IMR-90 (cell line): ENCODE measurements at regions of chr1 and their contacts with region 1.

Region 1: GRCh38 chr1:41573785-41574713 is 89.6 kb upstream of the EDN2 start:
- DNase-seq: peak; percentile 80
- ATAC-seq: peak; percentile 99
- H3K4me3 ChIP-seq: no peak overlapping the region
- H3K27ac ChIP-seq: no peak overlapping the region
- H3K4me1 ChIP-seq: no peaks in the 10 kb centered on the region
- H3K27me3 ChIP-seq: no peaks in the 10 kb centered on the region
- CTCF ChIP-seq: peak; percentile 99
- POLR2A ChIP-seq: peak; percentile 57; the same call in 1 of the 2 replicates
- RAD21 ChIP-seq: peak; percentile 100

Region 2: DNA sequence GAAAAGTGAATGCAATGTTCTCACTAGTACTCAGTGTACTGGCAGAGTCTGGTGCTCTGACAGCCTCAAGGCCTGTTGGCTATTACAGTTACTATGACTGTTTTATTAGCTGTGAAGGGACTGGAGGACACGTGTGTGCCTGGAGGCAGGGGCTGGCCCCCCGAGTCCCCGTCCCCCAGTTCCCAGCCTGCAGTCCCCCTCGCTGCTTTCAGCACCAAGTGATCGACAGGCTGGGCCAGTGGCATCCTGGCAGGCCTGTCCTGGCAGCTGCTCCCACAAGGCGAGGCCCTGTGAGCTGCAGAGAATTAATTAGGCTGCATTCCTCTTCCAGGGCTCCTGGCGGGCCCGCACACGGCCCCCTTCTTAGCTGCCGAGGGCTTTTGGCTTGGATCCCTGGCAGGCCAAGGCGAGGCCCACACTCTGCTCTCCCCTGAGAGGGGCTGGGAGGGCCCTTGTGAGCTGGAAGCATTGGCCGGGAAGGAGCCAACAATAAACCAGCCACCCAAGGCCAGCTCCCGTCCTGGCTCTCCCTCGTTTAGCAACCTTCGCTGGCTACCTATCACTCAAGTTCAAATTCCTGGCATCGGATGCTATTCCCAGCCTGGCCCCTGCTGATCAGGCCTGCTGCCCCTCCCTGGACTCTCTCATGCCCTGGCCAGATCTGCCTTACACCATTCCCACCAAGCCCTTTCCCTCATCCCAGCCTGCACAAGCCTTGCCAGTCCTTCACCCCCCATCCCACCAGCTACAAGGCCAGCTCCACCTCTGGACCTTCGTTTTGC is 99.4 kb before region 1 on chr1:
- CTCF ChIA-PET with region 1: no interaction called
- POLR2A ChIA-PET with region 1: no interaction called
- dilution Hi-C with region 1: no loop called
- in situ Hi-C with region 1: no loop called
- intact Hi-C with region 1: no loop called
- DNase-seq: no peak
- ATAC-seq: no peak
- H3K4me3 ChIP-seq: no peak overlapping the region
- H3K27ac ChIP-seq: no peak overlapping the region
- H3K4me1 ChIP-seq: no peaks in the 10 kb centered on the region; the same call in 1 of the 2 replicates
- H3K27me3 ChIP-seq: peaks cover 15% of the 10 kb centered on the region
- CTCF ChIP-seq: no peak
- POLR2A ChIP-seq: no peak
- RAD21 ChIP-seq: no peak

Region 3: DNA sequence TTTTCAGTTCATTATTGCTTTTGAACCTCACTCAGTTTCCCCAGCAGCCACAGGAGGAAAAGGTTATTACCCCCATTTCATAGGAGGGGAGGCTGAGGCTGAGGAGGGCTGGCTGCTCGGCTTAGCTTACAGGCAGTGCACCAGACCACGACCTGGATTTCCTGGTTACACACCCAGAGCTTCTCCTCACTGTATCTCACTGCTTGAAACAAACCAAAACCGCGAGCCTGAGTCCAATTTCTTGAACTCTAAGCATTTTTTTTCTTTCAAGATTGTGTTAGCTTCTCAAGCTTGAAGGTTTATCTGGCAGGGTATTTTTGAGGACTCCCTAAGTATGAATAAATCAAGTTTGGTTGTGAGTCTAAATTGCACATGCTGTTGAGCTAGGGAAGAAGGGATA is 99.3 kb after region 1 on chr1:
- CTCF ChIA-PET with region 1: no interaction called
- POLR2A ChIA-PET with region 1: no interaction called
- dilution Hi-C with region 1: no loop called
- in situ Hi-C with region 1: no loop called
- intact Hi-C with region 1: loop called (anchors 5 kb)
- DNase-seq: peak; percentile 64
- ATAC-seq: no peak
- H3K4me3 ChIP-seq: no peak overlapping the region
- H3K27ac ChIP-seq: peak overlapping the region; percentile 86
- H3K4me1 ChIP-seq: peaks cover 46% of the 10 kb centered on the region
- H3K27me3 ChIP-seq: no peaks in the 10 kb centered on the region
- CTCF ChIP-seq: no peak
- POLR2A ChIP-seq: no peak
- RAD21 ChIP-seq: no peak

Region 4: DNA sequence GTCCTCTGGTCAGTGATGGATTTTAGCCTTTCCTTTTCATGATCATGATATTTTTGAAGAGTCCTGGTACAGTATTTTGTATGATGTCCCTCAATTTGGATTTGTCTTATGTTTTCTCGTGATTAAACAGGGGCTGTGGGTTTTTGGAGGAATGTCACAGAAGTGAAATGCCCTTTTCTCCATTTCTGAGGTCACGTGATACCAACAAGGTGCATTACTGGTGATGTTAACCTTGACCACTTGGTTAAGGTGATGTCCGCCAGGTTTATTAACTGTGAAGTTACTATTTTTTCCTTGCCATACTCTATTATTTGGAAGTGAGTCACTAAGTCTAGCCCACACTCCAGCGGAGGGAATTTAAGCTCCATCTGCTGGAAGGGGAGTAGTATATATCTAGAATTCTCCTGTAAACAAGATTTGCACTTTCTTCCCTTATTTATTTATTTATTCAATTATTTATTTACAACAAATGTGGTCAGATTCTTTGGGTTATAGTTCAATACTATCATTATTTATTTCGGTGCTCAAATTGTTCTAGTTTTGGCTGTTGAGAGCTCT is 221.2 kb after region 1 on chr1:
- CTCF ChIA-PET with region 1: interaction called, 5 read pairs
- POLR2A ChIA-PET with region 1: no interaction called
- dilution Hi-C with region 1: no loop called
- in situ Hi-C with region 1: loop called (anchors 5 kb)
- intact Hi-C with region 1: loop called (anchors 1 kb)
- DNase-seq: peak; percentile 73
- ATAC-seq: peak; percentile 88
- H3K4me3 ChIP-seq: no peak overlapping the region
- H3K27ac ChIP-seq: no peak overlapping the region
- H3K4me1 ChIP-seq: no peaks in the 10 kb centered on the region; the same call in 1 of the 2 replicates
- H3K27me3 ChIP-seq: peaks cover 4% of the 10 kb centered on the region; the same call in 1 of the 2 replicates
- CTCF ChIP-seq: peak; percentile 75
- POLR2A ChIP-seq: no peak
- RAD21 ChIP-seq: peak; percentile 85

Region 5: GRCh38 chr1:41919764-41920397 is 345.8 kb after region 1 on chr1:
- CTCF ChIA-PET with region 1: no interaction called
- POLR2A ChIA-PET with region 1: no interaction called
- dilution Hi-C with region 1: no loop called
- in situ Hi-C with region 1: no loop called
- intact Hi-C with region 1: loop called (anchors 1 kb)
- DNase-seq: peak; percentile 26
- ATAC-seq: peak; percentile 63
- H3K4me3 ChIP-seq: peak overlapping the region; percentile 28; the same call in 1 of the 2 replicates
- H3K27ac ChIP-seq: no peak overlapping the region
- H3K4me1 ChIP-seq: peaks cover 9% of the 10 kb centered on the region
- H3K27me3 ChIP-seq: 0 out of 2 replicates have a peak, but pooled peaks cover 4% of the 10 kb centered on the region
- CTCF ChIP-seq: no peak
- POLR2A ChIP-seq: no peak
- RAD21 ChIP-seq: no peak

Region 6: GRCh38 chr1:42035830-42036604 is 462.0 kb after region 1 on chr1:
- CTCF ChIA-PET with region 1: no interaction called
- POLR2A ChIA-PET with region 1: no interaction called
- dilution Hi-C with region 1: no loop called
- in situ Hi-C with region 1: no loop called
- intact Hi-C with region 1: loop called (anchors 1 kb)
- DNase-seq: peak; percentile 85
- ATAC-seq: peak; percentile 98
- H3K4me3 ChIP-seq: peak overlapping the region; percentile 84
- H3K27ac ChIP-seq: peak overlapping the region; percentile 41; the same call in 1 of the 2 replicates
- H3K4me1 ChIP-seq: peaks cover 5% of the 10 kb centered on the region
- H3K27me3 ChIP-seq: peaks cover 8% of the 10 kb centered on the region
- CTCF ChIP-seq: no peak
- POLR2A ChIP-seq: no peak
- RAD21 ChIP-seq: no peak

Region 7: GRCh38 chr1:42173155-42173933 is 599.3 kb after region 1 on chr1:
- CTCF ChIA-PET with region 1: interaction called, 3 read pairs
- POLR2A ChIA-PET with region 1: no interaction called
- dilution Hi-C with region 1: no loop called
- in situ Hi-C with region 1: no loop called
- intact Hi-C with region 1: loop called (anchors 1 kb)
- DNase-seq: peak; percentile 28
- ATAC-seq: peak; percentile 76
- H3K4me3 ChIP-seq: no peak overlapping the region
- H3K27ac ChIP-seq: no peak overlapping the region
- H3K4me1 ChIP-seq: peaks cover 5% of the 10 kb centered on the region
- H3K27me3 ChIP-seq: no peaks in the 10 kb centered on the region
- CTCF ChIP-seq: peak; percentile 79
- POLR2A ChIP-seq: no peak
- RAD21 ChIP-seq: peak; percentile 61